K562 (cell line): ENCODE measurements at regions of chr15 and their contacts with region 1.

Region 1: DNA sequence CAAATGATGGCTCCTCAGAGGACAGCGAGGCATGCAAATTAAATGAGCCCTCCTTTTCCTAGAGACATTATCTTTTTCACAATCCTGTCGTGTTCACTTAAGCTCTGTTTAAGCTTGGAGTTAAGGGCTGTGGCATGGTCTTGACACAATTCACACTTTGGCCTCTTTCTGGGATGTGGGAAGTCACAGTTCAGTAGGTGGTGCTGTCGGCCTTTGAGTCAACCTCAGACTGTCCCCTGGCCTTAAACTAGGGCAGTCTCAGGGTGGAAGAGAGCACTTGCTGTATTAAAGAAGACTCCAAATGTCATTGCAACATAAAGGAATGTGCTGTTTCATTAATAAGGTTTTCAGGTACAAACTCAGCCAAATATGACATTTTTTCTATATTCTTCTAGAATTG is 351.0 kb downstream of the MCTP2 start:
- DNase-seq: peak; percentile 14 to 46 (median 20)
- ATAC-seq: peak; percentile 91
- H3K4me3 ChIP-seq: no peak overlapping the region
- H3K27ac ChIP-seq: no peak overlapping the region
- H3K4me1 ChIP-seq: no peaks in the 10 kb centered on the region
- H3K27me3 ChIP-seq: no peaks in the 10 kb centered on the region; a peak in 1 of 5 replicates
- CTCF ChIP-seq: peak; percentile 37 to 57 (median 57); a peak in 5 of 6 replicates
- EP300 ChIP-seq: no peak
- POLR2A ChIP-seq: no peak
- RAD21 ChIP-seq: peak; percentile 67 to 70

Region 2: GRCh38 chr15:94655249-94655880 is 73.0 kb after region 1 on chr15:
- CTCF ChIA-PET with region 1: no interaction called
- POLR2A ChIA-PET with region 1: no interaction called
- in situ Hi-C with region 1: no loop called
- intact Hi-C with region 1: loop called (anchors 5 kb)
- DNase-seq: no peak
- ATAC-seq: no peak
- H3K4me3 ChIP-seq: no peak overlapping the region
- H3K27ac ChIP-seq: no peak overlapping the region
- H3K4me1 ChIP-seq: no peaks in the 10 kb centered on the region
- H3K27me3 ChIP-seq: peaks cover 2 to 10% of the 10 kb centered on the region in 2 experiments; a peak in 2 of 5 replicates
- CTCF ChIP-seq: no peak
- EP300 ChIP-seq: no peak
- POLR2A ChIP-seq: no peak
- RAD21 ChIP-seq: no peak

Region 3: DNA sequence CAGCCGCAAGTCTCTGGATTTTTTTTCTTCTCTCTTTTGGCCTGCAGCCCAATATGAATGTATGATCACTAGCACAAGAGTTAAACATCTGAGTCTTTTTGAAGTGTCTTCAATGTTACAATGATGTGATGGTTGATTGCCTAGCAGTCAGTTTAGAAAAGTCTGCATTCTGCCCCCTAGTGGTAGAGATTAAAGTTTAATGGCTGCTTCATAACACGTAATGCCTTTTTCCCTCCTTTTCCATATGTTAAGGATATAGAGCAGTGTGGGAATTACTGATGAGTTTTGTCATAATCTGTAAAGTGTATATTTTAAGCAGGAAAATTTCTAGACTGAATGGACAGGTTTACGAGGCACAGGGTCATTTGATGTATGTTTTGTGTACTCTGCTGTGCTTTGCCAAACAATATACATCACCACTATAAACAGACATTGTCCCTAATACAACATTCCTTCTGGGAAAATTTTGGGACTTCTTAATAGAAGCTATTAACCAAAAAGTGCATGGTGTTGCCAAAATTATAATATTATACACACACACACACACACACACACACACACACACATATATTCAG is 709.6 kb after region 1 on chr15:
- CTCF ChIA-PET with region 1: no interaction called
- POLR2A ChIA-PET with region 1: no interaction called
- in situ Hi-C with region 1: no loop called
- intact Hi-C with region 1: loop called (anchors 2 kb)
- DNase-seq: peak; percentile 40 to 64 (median 59)
- ATAC-seq: peak; percentile 86
- H3K4me3 ChIP-seq: no peak overlapping the region
- H3K27ac ChIP-seq: no peak overlapping the region
- H3K4me1 ChIP-seq: no peaks in the 10 kb centered on the region
- H3K27me3 ChIP-seq: peaks cover 7 to 32% of the 10 kb centered on the region in 2 experiments
- CTCF ChIP-seq: peak; percentile 50 to 70 (median 62); a peak in 5 of 6 replicates
- EP300 ChIP-seq: no peak
- POLR2A ChIP-seq: no peak
- RAD21 ChIP-seq: peak; percentile 40 to 70; a peak in 3 of 4 replicates